Vagina (tissue), 2 donors: ENCODE measurements at regions of chr16 and their contacts with region 1.

Region 1: GRCh38 chr16:2513405-2514322 is at the start of gene ATP6V0C:
- DNase-seq: no peak
- H3K4me3 ChIP-seq: peak within 1 kb of the TSS; percentile 98 to 100
- H3K27ac ChIP-seq: peak within 1 kb of the TSS; percentile 99
- H3K4me1 ChIP-seq: peaks cover 50% of the 10 kb centered on the region
- H3K27me3 ChIP-seq: no peaks in the 10 kb centered on the region
- CTCF ChIP-seq: no peak
- POLR2A ChIP-seq: peak; percentile 20 to 88
- total RNA-seq, gene ATP6V0C: 133 TPM

Region 2: DNA sequence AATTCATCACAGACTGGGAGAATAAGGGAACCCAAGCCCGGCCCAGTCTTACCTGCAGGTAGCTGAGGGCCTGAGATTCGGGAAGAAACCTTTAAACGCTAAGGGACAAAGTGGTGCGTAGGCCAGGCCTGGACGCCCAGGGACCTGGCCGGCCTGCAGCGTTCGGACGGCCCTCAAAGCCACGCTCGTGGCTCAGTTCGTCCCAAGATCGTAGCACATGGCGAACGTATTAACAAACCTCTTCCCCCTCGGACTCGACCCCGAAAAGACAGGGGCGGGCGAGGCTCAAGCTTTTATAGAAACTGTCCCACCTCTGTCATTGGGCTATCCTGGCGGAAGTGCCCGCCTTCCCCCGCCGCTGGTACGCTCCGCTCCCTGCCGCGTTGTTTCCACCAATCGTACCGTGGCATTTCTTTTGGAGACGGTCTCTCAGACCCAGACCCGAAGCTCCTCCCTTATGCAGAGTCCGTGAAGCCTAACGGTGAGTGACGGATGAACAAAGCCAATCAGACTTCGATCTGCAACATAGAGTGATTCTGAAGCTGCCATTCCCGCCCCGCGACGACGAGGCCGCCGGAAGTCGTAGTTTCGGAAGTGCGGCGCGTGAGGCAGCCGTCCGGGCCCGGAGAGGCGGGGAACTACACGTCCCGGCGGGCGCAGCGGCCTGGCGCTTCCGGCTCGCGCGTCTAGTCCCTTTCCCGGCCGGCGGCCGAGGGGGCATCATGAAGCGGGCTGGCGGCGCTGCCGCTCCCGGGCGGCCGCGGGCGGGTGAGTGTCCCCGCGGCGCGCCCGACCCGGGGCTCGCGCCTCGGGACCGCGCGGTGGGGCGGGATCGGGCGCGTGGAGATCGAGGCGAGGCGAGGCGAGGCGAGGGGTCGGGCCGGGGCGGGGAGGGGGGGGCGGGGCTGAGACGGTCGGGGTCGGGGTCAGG is 358.3 kb before region 1 on chr16 and contains the start of gene TRAF7:
- intact Hi-C with region 1: loop called (anchors 10 kb)
- DNase-seq: peak; percentile 100
- H3K4me3 ChIP-seq: peak within 1 kb of the TSS; percentile 69 to 90
- H3K27ac ChIP-seq: peak within 1 kb of the TSS; percentile 78
- H3K4me1 ChIP-seq: peaks cover 89% of the 10 kb centered on the region
- H3K27me3 ChIP-seq: no peaks in the 10 kb centered on the region
- CTCF ChIP-seq: no peak
- POLR2A ChIP-seq: peak; percentile 84 to 99
- total RNA-seq, gene TRAF7: 38.8 TPM

Region 3: GRCh38 chr16:2251483-2252240 is 262.0 kb before region 1 on chr16 and contains the start of gene ECI1:
- intact Hi-C with region 1: loop called (anchors 10 kb)
- DNase-seq: peak in 1 of 2 donors; percentile 92
- H3K4me3 ChIP-seq: peak within 1 kb of the TSS; percentile 57 to 88
- H3K27ac ChIP-seq: peak within 1 kb of the TSS; percentile 75
- H3K4me1 ChIP-seq: peaks cover 17% of the 10 kb centered on the region
- H3K27me3 ChIP-seq: no peaks in the 10 kb centered on the region
- CTCF ChIP-seq: peak; percentile 37 to 73 (median 68)
- POLR2A ChIP-seq: peak in 1 of 2 donors; percentile 56
- total RNA-seq, gene ECI1: 72.9 TPM